ENCODE measurements at regions of chr4 and their contacts with region 1.

Region 1: DNA sequence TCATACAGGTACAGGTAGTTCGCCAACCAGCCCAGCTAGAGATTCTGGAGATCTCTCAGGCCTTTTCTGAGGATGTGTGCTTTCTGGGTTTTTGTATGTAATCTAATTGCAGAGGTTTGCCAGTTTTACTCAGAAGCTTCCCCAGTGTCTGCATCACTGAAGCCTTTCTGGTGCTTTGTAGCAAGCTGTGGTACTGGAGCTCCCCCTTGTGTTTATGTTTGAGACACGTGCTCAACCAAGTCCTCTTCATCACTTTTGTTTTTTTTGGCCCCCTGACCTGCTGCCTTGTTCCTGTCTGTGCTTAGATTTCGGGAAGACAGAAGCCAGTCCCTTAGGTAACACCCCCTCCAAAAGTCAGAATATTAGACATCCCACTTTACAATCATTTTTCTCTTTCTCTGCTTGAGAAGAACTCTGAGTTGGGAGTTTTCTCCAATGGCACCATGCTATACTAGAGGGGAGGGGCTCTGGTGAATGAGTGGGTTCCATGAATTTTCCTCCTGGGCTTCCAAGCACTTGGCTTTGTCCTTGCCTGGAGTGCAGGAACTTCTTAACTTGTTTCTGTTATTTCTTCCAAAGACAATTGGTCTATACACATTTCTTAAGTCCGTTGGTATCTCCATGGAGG is 128.4 kb upstream of the TBC1D9 start:
- DNase-seq: peak; percentile 34
- H3K4me3 ChIP-seq: no peak overlapping the region
- H3K27ac ChIP-seq: peak overlapping the region; percentile 21
- H3K27me3 ChIP-seq: no peaks in the 10 kb centered on the region
- CTCF ChIP-seq: peak; percentile 75

Region 2: GRCh38 chr4:140653718-140654494 is 230.6 kb before region 1 on chr4:
- CTCF ChIA-PET with region 1: no interaction called
- POLR2A ChIA-PET with region 1: no interaction called
- DNase-seq: no peak
- H3K4me3 ChIP-seq: no peak overlapping the region
- H3K27ac ChIP-seq: no peak overlapping the region
- H3K27me3 ChIP-seq: no peaks in the 10 kb centered on the region
- CTCF ChIP-seq: no peak

Region 3: GRCh38 chr4:140861359-140862176 is 23.0 kb before region 1 on chr4:
- CTCF ChIA-PET with region 1: interaction called, 29 read pairs
- POLR2A ChIA-PET with region 1: no interaction called
- DNase-seq: peak; percentile 80
- H3K4me3 ChIP-seq: no peak overlapping the region
- H3K27ac ChIP-seq: no peak overlapping the region
- H3K27me3 ChIP-seq: no peaks in the 10 kb centered on the region
- CTCF ChIP-seq: peak; percentile 82

Region 4: DNA sequence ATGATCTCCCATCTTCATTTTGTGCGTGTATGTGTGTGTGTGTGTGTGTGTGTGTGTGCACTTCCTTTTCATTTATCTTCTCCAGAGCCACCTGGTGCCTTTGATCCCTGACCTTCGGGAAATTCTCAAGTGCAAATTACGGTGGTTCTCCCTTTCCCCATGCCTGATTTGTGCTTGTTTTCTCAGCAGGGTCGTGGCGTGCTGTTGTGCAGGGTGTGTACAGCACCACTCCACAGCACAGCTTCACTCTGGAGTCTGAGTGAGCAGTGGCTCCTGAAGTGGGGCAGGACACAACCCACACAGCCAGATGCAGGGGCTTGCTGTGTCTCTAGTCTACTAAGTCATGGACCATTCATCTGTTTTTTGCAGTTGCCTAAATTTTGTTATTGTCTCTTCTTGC is 14.1 kb before region 1 on chr4:
- CTCF ChIA-PET with region 1: interaction called, 20 read pairs
- POLR2A ChIA-PET with region 1: no interaction called
- DNase-seq: no peak
- H3K4me3 ChIP-seq: no peak overlapping the region
- H3K27ac ChIP-seq: no peak overlapping the region
- H3K27me3 ChIP-seq: no peaks in the 10 kb centered on the region
- CTCF ChIP-seq: no peak

Region 5: DNA sequence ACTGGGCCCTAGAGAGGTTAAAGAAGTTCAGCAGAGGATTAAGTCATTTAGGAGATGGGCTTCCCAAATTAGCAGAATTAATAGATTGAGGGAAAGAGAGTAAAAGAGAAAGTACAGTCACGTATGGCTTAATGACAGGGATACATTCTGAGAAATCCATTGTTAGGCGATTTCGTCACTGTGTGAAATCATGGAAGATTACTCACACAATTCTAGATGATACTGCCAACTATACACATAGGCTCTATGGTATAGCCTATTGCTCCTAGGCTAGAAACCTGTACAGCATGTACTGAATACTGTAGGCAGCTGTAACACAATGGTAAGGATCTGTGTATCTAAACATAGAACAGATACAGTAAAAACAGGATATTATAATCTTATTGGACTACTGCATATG is 68.2 kb after region 1 on chr4:
- CTCF ChIA-PET with region 1: no interaction called
- POLR2A ChIA-PET with region 1: no interaction called
- DNase-seq: no peak
- H3K4me3 ChIP-seq: no peak overlapping the region
- H3K27ac ChIP-seq: no peak overlapping the region
- H3K27me3 ChIP-seq: no peaks in the 10 kb centered on the region
- CTCF ChIP-seq: no peak

Region 6: GRCh38 chr4:140971077-140971792 is 86.7 kb after region 1 on chr4:
- CTCF ChIA-PET with region 1: no interaction called
- POLR2A ChIA-PET with region 1: no interaction called
- DNase-seq: no peak
- H3K4me3 ChIP-seq: no peak overlapping the region
- H3K27ac ChIP-seq: no peak overlapping the region
- H3K27me3 ChIP-seq: no peaks in the 10 kb centered on the region
- CTCF ChIP-seq: no peak